CD4-positive, alpha-beta T cell (primary cell): ENCODE measurements at regions of chr3 and their contacts with region 1.

Region 1: GRCh38 chr3:56342475-56342874 is 125.8 kb downstream of the ERC2 start:
- DNase-seq: no peak
- ATAC-seq: no peak
- H3K4me3 ChIP-seq: no peak overlapping the region
- H3K4me3 Mint-ChIP-seq: no peak overlapping the region
- H3K27ac ChIP-seq: no peak overlapping the region
- H3K27ac Mint-ChIP-seq: no peak overlapping the region
- H3K4me1 ChIP-seq: no peaks in the 10 kb centered on the region
- H3K4me1 Mint-ChIP-seq: no peaks in the 10 kb centered on the region
- H3K27me3 ChIP-seq: peaks cover 0 to 5% of the 10 kb centered on the region in 2 experiments
- H3K27me3 Mint-ChIP-seq: peaks cover 38% of the 10 kb centered on the region
- CTCF ChIP-seq: no peak

Region 2: GRCh38 chr3:56357266-56357665 is 14.8 kb after region 1 on chr3:
- CTCF ChIA-PET with region 1: no interaction called
- POLR2A ChIA-PET with region 1: no interaction called
- intact Hi-C with region 1: no loop called
- DNase-seq: no peak
- ATAC-seq: no peak
- H3K4me3 ChIP-seq: no peak overlapping the region
- H3K4me3 Mint-ChIP-seq: no peak overlapping the region
- H3K27ac ChIP-seq: no peak overlapping the region
- H3K27ac Mint-ChIP-seq: no peak overlapping the region
- H3K4me1 ChIP-seq: no peaks in the 10 kb centered on the region
- H3K4me1 Mint-ChIP-seq: no peaks in the 10 kb centered on the region
- H3K27me3 ChIP-seq: no peaks in the 10 kb centered on the region
- H3K27me3 Mint-ChIP-seq: no peaks in the 10 kb centered on the region
- CTCF ChIP-seq: no peak

Region 3: GRCh38 chr3:56370991-56371775 is 28.7 kb after region 1 on chr3:
- CTCF ChIA-PET with region 1: no interaction called
- POLR2A ChIA-PET with region 1: no interaction called
- intact Hi-C with region 1: no loop called
- DNase-seq: no peak
- ATAC-seq: no peak
- H3K4me3 ChIP-seq: no peak overlapping the region
- H3K4me3 Mint-ChIP-seq: no peak overlapping the region
- H3K27ac ChIP-seq: no peak overlapping the region
- H3K27ac Mint-ChIP-seq: no peak overlapping the region
- H3K4me1 ChIP-seq: no peaks in the 10 kb centered on the region
- H3K4me1 Mint-ChIP-seq: no peaks in the 10 kb centered on the region
- H3K27me3 ChIP-seq: no peaks in the 10 kb centered on the region
- H3K27me3 Mint-ChIP-seq: peaks cover 22% of the 10 kb centered on the region
- CTCF ChIP-seq: no peak

Region 4: GRCh38 chr3:56547486-56547885 is 205.0 kb after region 1 on chr3:
- CTCF ChIA-PET with region 1: no interaction called
- POLR2A ChIA-PET with region 1: no interaction called
- intact Hi-C with region 1: loop called in 1 of 2 experiments (anchors 5 kb)
- DNase-seq: no peak
- ATAC-seq: no peak
- H3K4me3 ChIP-seq: no peak overlapping the region
- H3K4me3 Mint-ChIP-seq: no peak overlapping the region
- H3K27ac ChIP-seq: no peak overlapping the region
- H3K27ac Mint-ChIP-seq: no peak overlapping the region
- H3K4me1 ChIP-seq: no peaks in the 10 kb centered on the region
- H3K4me1 Mint-ChIP-seq: no peaks in the 10 kb centered on the region
- H3K27me3 ChIP-seq: peaks cover 0 to 4% of the 10 kb centered on the region in 2 experiments
- H3K27me3 Mint-ChIP-seq: peaks cover 23% of the 10 kb centered on the region
- CTCF ChIP-seq: no peak